GM12878 (cell line): ENCODE measurements at regions of chr4 and their contacts with region 1.

Region 1: DNA sequence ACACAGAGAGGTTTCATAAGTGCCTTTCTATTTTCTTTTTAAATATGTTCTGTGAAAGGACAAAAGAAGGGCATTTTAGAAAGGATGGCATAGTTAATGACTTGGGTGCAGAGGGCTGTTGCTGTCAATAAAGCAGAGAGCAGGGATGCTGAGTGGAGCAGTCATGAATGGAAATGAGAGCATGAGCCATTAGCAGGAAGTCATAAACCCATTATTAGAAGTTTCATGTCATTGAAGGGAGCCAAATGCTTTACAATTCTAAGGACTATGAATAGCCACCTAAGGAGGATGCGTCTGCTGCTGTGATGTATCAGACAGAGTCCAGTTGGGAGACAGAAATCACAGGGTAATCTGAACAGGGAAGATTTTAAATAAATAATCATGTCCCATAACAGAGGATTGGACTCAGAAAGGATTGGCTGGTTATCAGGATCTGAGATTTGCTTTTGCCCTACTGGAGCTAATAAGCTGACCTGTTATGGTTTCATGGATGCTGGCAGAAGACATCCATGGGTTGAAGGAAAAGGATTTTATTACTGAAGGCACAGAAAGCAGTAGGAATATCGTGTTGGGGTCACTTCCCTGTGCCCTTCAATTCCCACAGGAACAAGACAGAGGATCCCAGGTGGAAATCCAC is 47.5 kb upstream of the WDR19 start:
- DNase-seq: no peak
- ATAC-seq: peak; percentile 70
- H3K4me3 ChIP-seq: no peak overlapping the region
- H3K27ac ChIP-seq: peak overlapping the region; percentile 27; the same call in 1 of the 2 replicates
- H3K4me1 ChIP-seq: peaks cover 6% of the 10 kb centered on the region
- H3K27me3 ChIP-seq: no peaks in the 10 kb centered on the region
- CTCF ChIP-seq: no peak
- EP300 ChIP-seq: no peak
- POLR2A ChIP-seq: no peak
- RAD21 ChIP-seq: no peak

Region 2: GRCh38 chr4:38889143-38889542 is 245.7 kb before region 1 on chr4:
- CTCF ChIA-PET with region 1: interaction called, 36 read pairs
- POLR2A ChIA-PET with region 1: no interaction called
- RAD21 ChIA-PET with region 1: interaction called, 3 read pairs
- SMC1A ChIA-PET with region 1: interaction called, 17 read pairs
- in situ Hi-C with region 1: no loop called
- intact Hi-C with region 1: no loop called
- DNase-seq: peak; percentile 58
- ATAC-seq: peak; percentile 85
- H3K4me3 ChIP-seq: no peak overlapping the region
- H3K27ac ChIP-seq: peak overlapping the region; percentile 64; the same call in 1 of the 2 replicates
- H3K4me1 ChIP-seq: peaks cover 4% of the 10 kb centered on the region
- H3K27me3 ChIP-seq: no peaks in the 10 kb centered on the region
- CTCF ChIP-seq: no peak
- EP300 ChIP-seq: peak; percentile 68 to 86; a peak in 3 of 4 replicates
- POLR2A ChIP-seq: no peak
- RAD21 ChIP-seq: no peak

Region 3: GRCh38 chr4:38993694-38994093 is 141.1 kb before region 1 on chr4:
- CTCF ChIA-PET with region 1: interaction called, 4 read pairs
- POLR2A ChIA-PET with region 1: no interaction called
- RAD21 ChIA-PET with region 1: no interaction called
- SMC1A ChIA-PET with region 1: interaction called, 3 read pairs
- in situ Hi-C with region 1: no loop called
- intact Hi-C with region 1: loop called (anchors 5 kb)
- DNase-seq: no peak
- ATAC-seq: peak; percentile 49; the same call in 1 of the 3 replicates
- H3K4me3 ChIP-seq: no peak overlapping the region
- H3K27ac ChIP-seq: no peak overlapping the region
- H3K4me1 ChIP-seq: peaks cover 5% of the 10 kb centered on the region; the same call in 1 of the 2 replicates
- H3K27me3 ChIP-seq: no peaks in the 10 kb centered on the region
- CTCF ChIP-seq: peak in 2 of 3 experiments; percentile 16 to 19; a peak in 1 of 6 replicates
- EP300 ChIP-seq: no peak
- POLR2A ChIP-seq: no peak
- RAD21 ChIP-seq: peak; percentile 30; the same call in 1 of the 2 replicates

Region 4: GRCh38 chr4:39051454-39051853 is 83.3 kb before region 1 on chr4:
- CTCF ChIA-PET with region 1: interaction called, 21 read pairs
- POLR2A ChIA-PET with region 1: no interaction called
- RAD21 ChIA-PET with region 1: interaction called, 15 read pairs
- SMC1A ChIA-PET with region 1: interaction called, 8 read pairs
- in situ Hi-C with region 1: no loop called
- intact Hi-C with region 1: no loop called
- DNase-seq: no peak
- ATAC-seq: no peak
- H3K4me3 ChIP-seq: no peak overlapping the region
- H3K27ac ChIP-seq: no peak overlapping the region
- H3K4me1 ChIP-seq: peaks cover 8% of the 10 kb centered on the region
- H3K27me3 ChIP-seq: no peaks in the 10 kb centered on the region
- CTCF ChIP-seq: no peak
- EP300 ChIP-seq: no peak
- POLR2A ChIP-seq: no peak
- RAD21 ChIP-seq: no peak

Region 5: GRCh38 chr4:39166177-39166576 is 31.4 kb after region 1 on chr4:
- CTCF ChIA-PET with region 1: interaction called, 10 read pairs
- POLR2A ChIA-PET with region 1: no interaction called
- RAD21 ChIA-PET with region 1: no interaction called
- SMC1A ChIA-PET with region 1: interaction called, 3 read pairs
- in situ Hi-C with region 1: no loop called
- intact Hi-C with region 1: no loop called
- DNase-seq: no peak
- ATAC-seq: peak; percentile 77
- H3K4me3 ChIP-seq: 0 out of 2 replicates have a peak overlapping the region, but pooled peaks have one; percentile 22
- H3K27ac ChIP-seq: no peak overlapping the region
- H3K4me1 ChIP-seq: peaks cover 12% of the 10 kb centered on the region
- H3K27me3 ChIP-seq: no peaks in the 10 kb centered on the region
- CTCF ChIP-seq: no peak
- EP300 ChIP-seq: no peak
- POLR2A ChIP-seq: no peak
- RAD21 ChIP-seq: no peak